A549 (cell line): ENCODE measurements at regions of chr14 and their contacts with region 1.

Region 1: GRCh38 chr14:103292426-103293374 is 41.3 kb upstream of the EIF5 start:
- DNase-seq: peak; percentile 71 to 79
- ATAC-seq: peak; percentile 91 to 96
- H3K4me3 ChIP-seq: no peak overlapping the region
- H3K27ac ChIP-seq: peak overlapping the region; percentile 44 to 60; a peak in 5 of 6 replicates
- H3K4me1 ChIP-seq: peaks cover 11% of the 10 kb centered on the region; the same call in 1 of the 3 replicates
- CTCF ChIP-seq: peak; percentile 95
- EP300 ChIP-seq: no peak
- POLR2A ChIP-seq: no peak
- RAD21 ChIP-seq: peak; percentile 98 to 99

Region 2: DNA sequence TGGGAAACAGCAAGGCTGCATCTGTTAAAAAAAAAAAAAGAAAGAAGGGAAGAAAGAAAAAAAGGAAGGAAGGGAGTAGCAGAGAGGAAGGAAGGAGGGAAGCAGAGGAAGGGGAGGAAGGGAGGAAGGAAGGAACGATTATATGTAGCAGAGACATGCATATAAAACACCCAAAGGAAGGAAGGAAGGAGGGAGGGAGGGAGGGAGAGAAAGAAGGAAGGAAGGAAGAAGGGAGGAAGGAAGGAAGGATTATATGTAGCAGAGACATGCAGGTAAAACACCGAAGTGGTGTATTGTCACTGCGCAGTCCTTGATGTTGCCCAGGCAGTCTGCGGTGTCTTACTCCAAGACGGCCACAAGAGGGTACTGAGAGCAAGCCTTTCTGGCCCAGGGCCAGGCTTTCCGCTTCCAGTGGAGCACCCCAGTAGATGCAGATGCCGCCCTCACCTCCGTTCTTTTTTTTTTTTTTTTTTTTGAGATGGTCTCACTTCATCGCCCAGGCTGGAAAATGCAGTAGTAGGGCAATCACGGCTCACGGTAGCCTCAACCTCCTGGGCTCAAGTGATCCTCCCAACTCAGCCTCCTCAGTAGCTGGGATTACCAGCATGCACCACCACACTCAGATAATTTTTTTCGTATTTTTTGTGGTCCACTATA is 214.5 kb before region 1 on chr14:
- CTCF ChIA-PET with region 1: interaction called, 68 read pairs
- POLR2A ChIA-PET with region 1: no interaction called
- DNase-seq: peak; percentile 86 to 87
- ATAC-seq: peak; percentile 26 to 35; a peak in 4 of 6 replicates
- H3K4me3 ChIP-seq: no peak overlapping the region
- H3K27ac ChIP-seq: peak overlapping the region in 1 of 2 experiments; percentile 56; a peak in 3 of 6 replicates
- H3K4me1 ChIP-seq: peaks cover 21% of the 10 kb centered on the region
- CTCF ChIP-seq: peak; percentile 75
- EP300 ChIP-seq: no peak
- POLR2A ChIP-seq: no peak
- RAD21 ChIP-seq: peak; percentile 73 to 77

Region 3: GRCh38 chr14:103121846-103122584 is 170.7 kb before region 1 on chr14:
- CTCF ChIA-PET with region 1: interaction called, 13 read pairs
- POLR2A ChIA-PET with region 1: no interaction called
- DNase-seq: peak; percentile 83 to 98
- ATAC-seq: peak; percentile 66 to 68
- H3K4me3 ChIP-seq: peak overlapping the region; percentile 83
- H3K27ac ChIP-seq: peak overlapping the region; percentile 96 to 98
- H3K4me1 ChIP-seq: peaks cover 71% of the 10 kb centered on the region
- CTCF ChIP-seq: no peak
- EP300 ChIP-seq: peak; percentile 40 to 78; a peak in 2 of 5 replicates
- POLR2A ChIP-seq: peak; percentile 26
- RAD21 ChIP-seq: peak in 1 of 2 experiments; percentile 48; a peak in 1 of 5 replicates

Region 4: GRCh38 chr14:103155013-103155412 is 137.7 kb before region 1 on chr14:
- CTCF ChIA-PET with region 1: interaction called, 12 read pairs
- POLR2A ChIA-PET with region 1: no interaction called
- DNase-seq: peak; percentile 88 to 89
- ATAC-seq: peak; percentile 96 to 98
- H3K4me3 ChIP-seq: no peak overlapping the region
- H3K27ac ChIP-seq: peak overlapping the region; percentile 79 to 93
- H3K4me1 ChIP-seq: peaks cover 25% of the 10 kb centered on the region
- CTCF ChIP-seq: no peak
- EP300 ChIP-seq: no peak
- POLR2A ChIP-seq: no peak
- RAD21 ChIP-seq: no peak

Region 5: DNA sequence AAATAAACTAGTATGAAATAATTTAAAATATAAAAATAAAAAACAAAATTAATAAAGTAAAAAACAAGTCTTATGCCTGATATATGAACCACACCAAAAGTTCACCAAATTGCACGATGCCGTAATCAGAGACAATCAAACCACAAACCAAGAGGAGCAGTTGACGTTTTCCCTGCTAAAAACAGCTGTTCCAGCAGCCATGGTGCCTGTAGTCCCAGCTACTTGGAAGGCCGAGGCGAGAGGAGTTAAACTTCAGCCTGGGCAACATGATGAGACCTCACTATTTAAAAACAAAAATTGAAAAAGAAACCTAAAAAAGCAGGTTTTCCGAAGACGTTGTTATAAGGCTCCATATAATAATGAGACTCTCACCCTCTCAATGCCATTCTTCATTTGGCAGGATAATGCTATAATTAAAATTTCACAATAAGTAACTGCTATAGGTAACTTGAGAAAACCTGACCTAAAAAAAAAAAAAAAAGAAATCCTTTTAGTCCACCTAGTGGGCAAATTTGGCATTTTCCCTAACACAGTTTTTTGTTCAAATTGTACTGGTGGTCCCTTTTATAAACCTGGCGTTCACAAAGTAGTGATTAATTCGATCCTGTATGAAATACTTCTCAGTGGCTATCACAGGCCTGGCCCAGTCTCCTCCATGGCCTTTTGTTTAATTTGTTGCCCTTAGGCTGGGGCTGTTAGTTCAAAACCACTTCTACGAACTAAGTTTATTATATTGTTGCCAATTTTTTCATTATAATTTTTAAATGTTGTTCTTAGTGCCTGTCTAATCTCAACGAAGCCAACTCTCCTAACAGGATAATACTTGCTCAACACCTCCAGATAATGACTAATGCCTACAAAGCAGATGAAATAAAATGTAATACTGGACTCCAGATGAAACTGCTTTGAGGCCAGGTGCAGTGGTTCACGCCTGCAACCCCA is 107.4 kb before region 1 on chr14:
- CTCF ChIA-PET with region 1: interaction called, 152 read pairs
- POLR2A ChIA-PET with region 1: no interaction called
- DNase-seq: peak; percentile 31 to 54
- ATAC-seq: peak in 1 of 2 experiments; percentile 35; a peak in 2 of 6 replicates
- H3K4me3 ChIP-seq: no peak overlapping the region
- H3K27ac ChIP-seq: peak overlapping the region; percentile 44 to 74; a peak in 5 of 6 replicates
- H3K4me1 ChIP-seq: peaks cover 28% of the 10 kb centered on the region
- CTCF ChIP-seq: peak; percentile 75
- EP300 ChIP-seq: no peak
- POLR2A ChIP-seq: no peak
- RAD21 ChIP-seq: peak; percentile 71 to 75

Region 6: DNA sequence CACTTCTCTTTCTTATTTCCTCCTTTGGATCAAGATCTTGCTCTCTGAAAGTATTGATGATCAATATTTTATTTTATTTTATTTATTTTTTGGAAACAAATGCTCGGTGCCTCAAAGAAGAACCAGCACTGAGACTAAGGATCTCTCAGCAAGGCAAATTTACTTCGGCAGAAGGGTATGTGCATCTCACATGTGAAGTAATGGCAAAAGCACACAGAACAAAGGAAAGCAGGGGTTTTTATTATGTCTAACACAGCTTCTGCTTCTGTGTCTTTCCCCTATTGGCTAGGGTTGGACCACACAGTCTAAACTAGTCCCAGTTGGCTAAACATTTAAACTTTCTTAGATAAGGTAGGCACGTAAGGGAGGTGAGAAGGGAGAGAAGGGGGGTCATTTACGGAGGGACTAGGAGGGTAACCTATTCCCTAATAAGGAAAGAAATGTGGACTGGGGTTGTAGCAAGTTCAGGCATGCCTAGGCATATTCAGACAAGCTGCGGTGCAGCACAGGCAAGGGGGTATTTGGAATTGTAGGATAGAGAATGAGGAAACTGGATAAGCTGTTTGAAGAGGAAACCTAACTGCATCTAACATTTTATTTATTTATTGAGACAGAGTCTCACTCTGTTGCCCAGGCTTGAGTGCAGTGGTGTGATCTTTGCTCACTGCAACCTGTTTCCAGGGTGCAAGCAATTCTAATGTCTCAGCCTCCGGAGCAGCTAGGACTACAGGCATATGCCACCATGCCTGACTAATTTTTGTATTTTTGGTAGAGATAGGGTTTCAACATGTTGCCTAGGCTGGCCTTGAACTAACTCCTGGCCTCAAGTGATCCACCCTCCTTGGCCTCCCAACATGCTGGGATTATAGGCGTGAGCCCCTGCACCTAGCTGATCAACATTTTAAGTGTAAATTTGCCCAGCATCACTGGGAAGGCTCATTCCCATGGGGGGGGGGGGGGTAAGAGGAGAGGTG is 48.6 kb before region 1 on chr14:
- CTCF ChIA-PET with region 1: interaction called, 13 read pairs
- POLR2A ChIA-PET with region 1: no interaction called
- DNase-seq: peak in 1 of 2 experiments; percentile 71
- ATAC-seq: no peak
- H3K4me3 ChIP-seq: no peak overlapping the region
- H3K27ac ChIP-seq: peak overlapping the region; percentile 80 to 88
- H3K4me1 ChIP-seq: peaks cover 23% of the 10 kb centered on the region
- CTCF ChIP-seq: no peak
- EP300 ChIP-seq: no peak
- POLR2A ChIP-seq: no peak
- RAD21 ChIP-seq: no peak

Region 7: GRCh38 chr14:103281496-103282231 is 11.0 kb before region 1 on chr14:
- CTCF ChIA-PET with region 1: interaction called, 64 read pairs
- POLR2A ChIA-PET with region 1: no interaction called
- DNase-seq: peak; percentile 62 to 70
- ATAC-seq: peak; percentile 86 to 90; a peak in 5 of 6 replicates
- H3K4me3 ChIP-seq: no peak overlapping the region
- H3K27ac ChIP-seq: peak overlapping the region; percentile 61 to 80
- H3K4me1 ChIP-seq: peaks cover 34% of the 10 kb centered on the region
- CTCF ChIP-seq: peak; percentile 25; the same call in 2 of the 3 replicates
- EP300 ChIP-seq: no peak
- POLR2A ChIP-seq: no peak
- RAD21 ChIP-seq: peak; percentile 60 to 71

Region 8: GRCh38 chr14:103343905-103344797 is 51.5 kb after region 1 on chr14:
- CTCF ChIA-PET with region 1: no interaction called
- POLR2A ChIA-PET with region 1: no interaction called
- DNase-seq: no peak
- ATAC-seq: no peak
- H3K4me3 ChIP-seq: no peak overlapping the region
- H3K27ac ChIP-seq: no peak overlapping the region
- H3K4me1 ChIP-seq: no peaks in the 10 kb centered on the region
- CTCF ChIP-seq: no peak
- EP300 ChIP-seq: no peak
- POLR2A ChIP-seq: no peak
- RAD21 ChIP-seq: no peak

Region 9: GRCh38 chr14:103576371-103577024 is 283.8 kb after region 1 on chr14:
- CTCF ChIA-PET with region 1: no interaction called
- POLR2A ChIA-PET with region 1: no interaction called
- DNase-seq: peak; percentile 81
- ATAC-seq: peak; percentile 96 to 98
- H3K4me3 ChIP-seq: no peak overlapping the region
- H3K27ac ChIP-seq: peak overlapping the region; percentile 65 to 86
- H3K4me1 ChIP-seq: peaks cover 23% of the 10 kb centered on the region
- CTCF ChIP-seq: no peak
- EP300 ChIP-seq: no peak
- POLR2A ChIP-seq: no peak
- RAD21 ChIP-seq: no peak